Activated CD4-positive, alpha-beta T cell treated with anti-CD3 and anti-CD28 coated beads for 36 hours (primary cell): ENCODE measurements at regions of chr6 and their contacts with region 1.

Region 1: GRCh38 chr6:11093589-11094410 is at the start of gene SMIM13:
- DNase-seq: peak; percentile 98
- ATAC-seq: peak; percentile 95
- H3K4me3 Mint-ChIP-seq: peak within 1 kb of the TSS; percentile 96
- H3K27ac Mint-ChIP-seq: peak within 1 kb of the TSS; percentile 99
- H3K4me1 Mint-ChIP-seq: peaks cover 25% of the 10 kb centered on the region
- H3K27me3 Mint-ChIP-seq: no peaks in the 10 kb centered on the region
- total RNA-seq, gene SMIM13: 6.3 to 7.9 TPM

Region 2: GRCh38 chr6:10404107-10404798 is 689.5 kb before region 1 on chr6:
- CTCF ChIA-PET with region 1: no interaction called
- POLR2A ChIA-PET with region 1: no interaction called
- intact Hi-C with region 1: loop called (anchors 1 to 10 kb)
- DNase-seq: peak; percentile 95
- ATAC-seq: peak; percentile 95
- H3K4me3 Mint-ChIP-seq: peak overlapping the region; percentile 71
- H3K27ac Mint-ChIP-seq: peak overlapping the region; percentile 84
- H3K4me1 Mint-ChIP-seq: peaks cover 7% of the 10 kb centered on the region
- H3K27me3 Mint-ChIP-seq: peaks cover 60% of the 10 kb centered on the region

Region 3: GRCh38 chr6:10722820-10723566 is 370.8 kb before region 1 on chr6 and contains the start of gene TMEM14C:
- CTCF ChIA-PET with region 1: no interaction called
- POLR2A ChIA-PET with region 1: no interaction called
- intact Hi-C with region 1: loop called in 1 of 2 experiments (anchors 1 kb)
- DNase-seq: peak; percentile 94
- ATAC-seq: peak; percentile 95
- H3K4me3 Mint-ChIP-seq: peak within 1 kb of the TSS; percentile 92
- H3K27ac Mint-ChIP-seq: peak within 1 kb of the TSS; percentile 93
- H3K4me1 Mint-ChIP-seq: peaks cover 49% of the 10 kb centered on the region
- H3K27me3 Mint-ChIP-seq: no peaks in the 10 kb centered on the region
- total RNA-seq, gene TMEM14C: 67.6 to 81.7 TPM

Region 4: DNA sequence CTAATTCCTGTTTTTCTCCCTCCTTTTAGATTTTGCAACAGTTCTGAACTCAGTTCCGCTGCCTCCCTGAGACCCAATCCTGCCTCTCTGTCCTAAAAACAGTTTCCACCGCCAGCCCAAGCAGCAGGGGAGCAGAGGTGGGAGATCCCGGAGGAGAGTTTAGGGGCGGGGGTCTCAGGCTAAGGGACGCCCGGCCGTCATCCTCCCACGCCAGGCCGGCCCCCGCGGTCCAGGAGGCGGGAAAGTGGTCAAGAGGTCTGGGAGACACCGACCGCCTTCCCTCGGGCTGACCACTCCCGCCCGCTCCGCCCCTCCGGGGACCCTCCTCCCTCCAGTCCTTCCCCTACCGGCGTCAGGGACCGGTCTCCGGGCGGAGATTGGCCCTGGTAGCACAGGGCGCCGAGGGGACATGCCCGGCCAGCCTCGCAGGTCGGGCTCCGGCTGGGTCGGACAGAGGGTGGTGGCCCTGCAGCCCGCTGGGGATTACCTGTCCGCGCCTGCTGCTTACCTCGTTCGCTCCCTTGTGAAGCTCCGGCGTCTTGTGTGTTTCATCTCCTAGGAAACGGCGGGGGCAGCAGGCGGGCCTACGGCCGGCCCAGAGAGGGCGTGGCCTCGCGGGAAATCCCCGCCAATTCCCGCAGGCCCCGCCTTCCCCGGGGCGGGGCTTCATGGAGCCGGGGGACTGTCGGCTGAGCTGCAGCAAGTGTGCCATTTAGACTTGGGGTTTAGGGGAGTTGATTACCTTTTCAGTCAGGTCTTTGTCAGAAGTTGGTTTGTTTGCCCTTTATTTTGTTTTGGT is 255.6 kb before region 1 on chr6 and contains the start of gene MAK:
- CTCF ChIA-PET with region 1: no interaction called
- POLR2A ChIA-PET with region 1: no interaction called
- intact Hi-C with region 1: loop called (anchors 1 kb)
- DNase-seq: peak; percentile 91
- ATAC-seq: peak; percentile 89
- H3K4me3 Mint-ChIP-seq: peak within 1 kb of the TSS; percentile 70
- H3K27ac Mint-ChIP-seq: peak within 1 kb of the TSS; percentile 96
- H3K4me1 Mint-ChIP-seq: peaks cover 22% of the 10 kb centered on the region
- H3K27me3 Mint-ChIP-seq: peaks cover 48% of the 10 kb centered on the region
- total RNA-seq, gene MAK: 0.42 to 0.43 TPM

Region 5: GRCh38 chr6:11139056-11139960 is 45.5 kb after region 1 on chr6:
- CTCF ChIA-PET with region 1: no interaction called
- POLR2A ChIA-PET with region 1: no interaction called
- intact Hi-C with region 1: loop called (anchors 5 kb)
- DNase-seq: no peak
- ATAC-seq: peak; percentile 80
- H3K4me3 Mint-ChIP-seq: no peak overlapping the region
- H3K27ac Mint-ChIP-seq: peak overlapping the region; percentile 1
- H3K4me1 Mint-ChIP-seq: peaks cover 17% of the 10 kb centered on the region
- H3K27me3 Mint-ChIP-seq: no peaks in the 10 kb centered on the region

Region 6: GRCh38 chr6:11232193-11232769 is 138.5 kb after region 1 on chr6 and contains the start of gene NEDD9:
- CTCF ChIA-PET with region 1: no interaction called
- POLR2A ChIA-PET with region 1: no interaction called
- intact Hi-C with region 1: loop called in 1 of 2 experiments (anchors 1 kb)
- DNase-seq: peak; percentile 97
- ATAC-seq: peak; percentile 96
- H3K4me3 Mint-ChIP-seq: peak within 1 kb of the TSS; percentile 81
- H3K27ac Mint-ChIP-seq: peak within 1 kb of the TSS; percentile 95
- H3K4me1 Mint-ChIP-seq: peaks cover 65% of the 10 kb centered on the region
- H3K27me3 Mint-ChIP-seq: no peaks in the 10 kb centered on the region
- total RNA-seq, gene NEDD9: 23.6 to 27.3 TPM

Region 7: DNA sequence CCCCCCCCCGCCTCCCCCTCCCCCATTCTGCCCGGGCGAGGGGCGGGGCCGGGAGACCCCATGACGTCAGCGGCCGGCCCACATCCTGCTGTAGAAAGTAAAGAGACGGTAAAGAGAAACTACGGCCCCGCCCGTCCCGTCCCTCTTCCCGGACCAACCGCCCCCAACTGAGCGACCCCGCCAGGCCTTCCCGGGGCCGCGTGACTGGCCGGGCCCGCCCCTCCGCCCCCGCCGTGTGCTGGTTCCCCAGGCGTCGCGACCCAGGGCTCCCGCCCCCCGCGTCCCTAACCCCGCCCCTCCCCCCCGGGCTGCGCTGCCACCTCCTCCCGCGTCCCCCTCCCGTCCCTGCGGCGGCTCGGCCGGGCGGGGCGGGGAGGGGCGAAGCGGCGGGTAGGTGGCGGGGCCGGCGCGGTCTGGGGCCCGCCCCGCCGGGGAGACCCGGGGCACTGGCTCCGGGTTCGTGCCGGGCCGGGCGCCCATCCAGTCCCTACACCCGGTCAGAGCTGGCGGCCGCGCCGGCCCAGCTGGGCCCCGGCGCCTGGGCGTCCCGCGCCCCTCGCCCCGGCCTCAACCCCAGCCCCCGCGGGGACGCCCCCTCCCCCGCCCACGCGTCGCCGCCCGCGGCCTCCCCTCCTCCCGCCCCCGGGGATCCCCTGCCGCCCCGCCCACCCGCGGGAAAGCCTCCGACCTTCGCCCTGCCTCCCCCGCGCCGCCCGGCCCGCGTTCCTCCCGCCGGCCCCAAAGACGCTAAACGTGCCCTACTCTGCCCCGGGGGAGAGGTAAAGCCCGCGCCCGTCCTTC is 917.7 kb after region 1 on chr6:
- CTCF ChIA-PET with region 1: no interaction called
- POLR2A ChIA-PET with region 1: no interaction called
- intact Hi-C with region 1: loop called in 1 of 2 experiments (anchors 2 kb)
- DNase-seq: peak; percentile 99
- ATAC-seq: peak; percentile 77
- H3K4me3 Mint-ChIP-seq: peak overlapping the region; percentile 96
- H3K27ac Mint-ChIP-seq: peak overlapping the region; percentile 98
- H3K4me1 Mint-ChIP-seq: peaks cover 39% of the 10 kb centered on the region
- H3K27me3 Mint-ChIP-seq: no peaks in the 10 kb centered on the region